Psoas muscle (tissue), 8 donors: ENCODE measurements at regions of chr11 and their contacts with region 1.

Region 1: DNA sequence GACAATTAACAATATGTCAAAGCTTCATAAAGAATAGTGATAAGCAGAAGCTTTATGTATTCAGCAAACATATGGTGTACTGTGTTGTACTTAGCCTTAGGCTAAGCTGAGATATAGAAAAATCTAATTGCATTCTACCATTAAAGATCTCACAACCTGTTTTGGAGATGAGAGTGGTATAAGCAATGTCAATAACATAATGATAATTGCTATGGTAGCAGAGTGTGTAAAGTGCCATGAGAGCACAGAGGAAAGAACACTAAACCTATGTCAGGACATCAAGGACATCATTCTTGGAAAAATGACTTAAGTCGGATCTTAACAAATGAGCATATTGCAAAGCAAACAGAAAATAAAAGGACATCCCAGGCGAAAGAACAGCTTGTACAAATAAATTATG is 28.6 kb upstream of the ANGPTL5 start:
- DNase-seq: no peak
- ATAC-seq: no peak
- H3K4me3 ChIP-seq: no peak overlapping the region
- H3K27ac ChIP-seq: no peak overlapping the region
- H3K4me1 ChIP-seq: no peaks in the 10 kb centered on the region
- H3K27me3 ChIP-seq: no peaks in the 10 kb centered on the region
- CTCF ChIP-seq: no peak

Region 2: DNA sequence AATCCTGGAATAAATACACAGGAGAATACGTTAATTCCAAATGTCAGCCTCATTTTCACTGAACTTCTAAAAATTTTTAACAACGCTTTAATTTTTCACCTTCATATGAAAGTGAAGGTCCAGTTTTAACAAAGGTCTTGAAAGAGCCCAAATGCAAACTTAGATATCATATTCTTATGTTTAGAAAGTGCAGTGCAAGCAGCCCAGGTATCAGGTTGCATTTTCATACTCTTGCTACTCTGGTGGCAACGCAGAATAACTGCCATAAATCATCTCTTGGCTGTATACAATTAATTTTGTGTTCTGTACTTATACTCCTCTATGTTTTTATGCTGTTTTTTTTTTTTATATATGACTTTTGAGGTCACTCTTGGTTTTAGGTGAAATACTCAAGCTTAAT is 1754.5 kb before region 1 on chr11:
- intact Hi-C with region 1: loop called in 1 of 2 experiments (anchors 5 kb)
- DNase-seq: no peak
- ATAC-seq: no peak
- H3K4me3 ChIP-seq: no peak overlapping the region
- H3K27ac ChIP-seq: no peak overlapping the region
- H3K4me1 ChIP-seq: no peaks in the 10 kb centered on the region
- H3K27me3 ChIP-seq: no peaks in the 10 kb centered on the region
- CTCF ChIP-seq: no peak

Region 3: GRCh38 chr11:101987370-101987769 is 42.4 kb after region 1 on chr11:
- intact Hi-C with region 1: no loop called
- DNase-seq: no peak
- ATAC-seq: no peak
- H3K4me3 ChIP-seq: no peak overlapping the region
- H3K27ac ChIP-seq: no peak overlapping the region
- H3K4me1 ChIP-seq: no peaks in the 10 kb centered on the region
- H3K27me3 ChIP-seq: no peaks in the 10 kb centered on the region
- CTCF ChIP-seq: no peak